Activated CD4-positive, alpha-beta T cell treated with anti-CD3 and anti-CD28 coated beads for 36 hours (primary cell): ENCODE measurements at regions of chr16 and their contacts with region 1.

Region 1: GRCh38 chr16:66608241-66609138 is 4.0 kb downstream of the CMTM3 start:
- DNase-seq: peak; percentile 92
- ATAC-seq: peak; percentile 50
- H3K4me3 Mint-ChIP-seq: no peak overlapping the region
- H3K27ac Mint-ChIP-seq: peak overlapping the region; percentile 78
- H3K4me1 Mint-ChIP-seq: peaks cover 35% of the 10 kb centered on the region
- H3K27me3 Mint-ChIP-seq: no peaks in the 10 kb centered on the region

Region 2: DNA sequence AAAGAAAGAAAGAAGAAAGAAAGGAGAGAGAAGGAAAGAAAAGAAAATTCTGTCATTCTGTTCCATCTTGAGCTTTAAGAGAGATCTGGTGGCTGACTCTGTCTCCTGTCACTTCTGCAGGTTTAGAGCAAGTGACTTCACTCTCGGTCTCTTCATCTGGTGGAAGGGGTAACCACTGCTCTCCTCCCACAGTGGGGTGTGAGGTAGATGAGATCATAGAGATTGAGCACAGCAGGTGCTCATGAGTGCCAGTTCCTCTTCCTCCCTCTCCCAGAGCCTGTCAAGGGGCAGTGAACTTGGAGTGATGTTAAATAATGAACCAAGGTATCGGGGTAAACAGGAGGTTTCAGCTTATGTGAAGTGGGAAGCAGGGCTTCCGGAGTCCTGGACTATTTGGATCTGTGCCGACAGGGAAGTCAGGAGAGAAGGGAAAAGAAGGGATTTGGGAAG is 133.7 kb before region 1 on chr16:
- CTCF ChIA-PET with region 1: interaction called, 13 read pairs
- POLR2A ChIA-PET with region 1: no interaction called
- intact Hi-C with region 1: loop called in 1 of 2 experiments (anchors 2 kb)
- DNase-seq: peak; percentile 77
- ATAC-seq: peak; percentile 91
- H3K4me3 Mint-ChIP-seq: no peak overlapping the region
- H3K27ac Mint-ChIP-seq: peak overlapping the region; percentile 68
- H3K4me1 Mint-ChIP-seq: peaks cover 25% of the 10 kb centered on the region
- H3K27me3 Mint-ChIP-seq: no peaks in the 10 kb centered on the region

Region 3: DNA sequence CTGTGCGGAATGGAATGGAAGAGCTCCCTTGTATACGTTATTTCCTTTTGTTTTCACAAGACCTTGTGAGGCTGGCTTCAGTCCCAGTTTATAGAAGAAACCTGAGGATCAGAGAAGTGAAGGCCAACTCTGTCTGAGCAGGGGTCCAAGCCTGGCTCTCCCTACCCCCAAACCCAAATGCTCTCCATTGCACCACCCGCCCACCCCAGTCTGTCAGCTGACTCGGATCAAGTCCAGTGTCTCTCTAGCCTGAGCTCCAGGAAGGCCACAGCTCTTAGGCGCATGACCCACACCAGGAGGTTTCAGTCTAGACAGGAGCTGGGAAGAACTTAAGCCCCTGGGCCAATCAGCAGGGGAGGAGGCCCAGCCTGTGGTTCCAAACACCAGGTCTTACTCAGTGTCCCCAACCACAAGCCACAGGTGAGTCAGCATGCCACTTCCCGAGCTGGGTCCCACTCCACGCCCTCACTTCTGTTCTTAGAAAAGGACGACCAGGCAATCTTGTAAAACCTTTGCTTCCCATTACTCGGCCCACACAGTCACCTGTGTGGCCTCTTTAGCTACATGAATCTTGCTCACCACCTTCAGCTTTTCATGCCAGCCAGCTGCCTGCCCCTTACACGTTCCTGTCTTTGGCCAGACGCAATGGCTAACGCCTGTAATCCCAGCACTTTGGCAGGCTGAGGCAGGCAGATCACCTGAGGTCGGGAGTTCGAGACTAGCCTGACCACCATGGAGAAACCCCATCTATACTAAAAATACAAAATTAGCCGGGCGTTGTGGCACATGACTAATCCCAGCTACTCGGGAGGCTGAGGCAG is 86.3 kb before region 1 on chr16:
- CTCF ChIA-PET with region 1: interaction called, 11 read pairs
- POLR2A ChIA-PET with region 1: interaction called, 4 read pairs
- intact Hi-C with region 1: loop called in 1 of 2 experiments (anchors 1 kb)
- DNase-seq: peak; percentile 96
- ATAC-seq: peak; percentile 86
- H3K4me3 Mint-ChIP-seq: peak overlapping the region; percentile 55
- H3K27ac Mint-ChIP-seq: peak overlapping the region; percentile 86
- H3K4me1 Mint-ChIP-seq: peaks cover 83% of the 10 kb centered on the region
- H3K27me3 Mint-ChIP-seq: no peaks in the 10 kb centered on the region

Region 4: GRCh38 chr16:66588981-66589713 is 19.3 kb before region 1 on chr16:
- CTCF ChIA-PET with region 1: interaction called, 16 read pairs
- POLR2A ChIA-PET with region 1: no interaction called
- intact Hi-C with region 1: loop called (anchors 1 to 2 kb)
- DNase-seq: peak; percentile 86
- ATAC-seq: peak; percentile 99
- H3K4me3 Mint-ChIP-seq: peak overlapping the region; percentile 63
- H3K27ac Mint-ChIP-seq: peak overlapping the region; percentile 65
- H3K4me1 Mint-ChIP-seq: peaks cover 35% of the 10 kb centered on the region
- H3K27me3 Mint-ChIP-seq: no peaks in the 10 kb centered on the region

Region 5: GRCh38 chr16:66696669-66697630 is 88.5 kb after region 1 on chr16 and contains the start of gene CMTM4:
- CTCF ChIA-PET with region 1: interaction called, 3 read pairs
- POLR2A ChIA-PET with region 1: no interaction called
- intact Hi-C with region 1: loop called in 1 of 2 experiments (anchors 1 kb)
- DNase-seq: peak; percentile 87
- ATAC-seq: peak; percentile 96
- H3K4me3 Mint-ChIP-seq: peak within 1 kb of the TSS; percentile 73
- H3K27ac Mint-ChIP-seq: no peak within 1 kb of the TSS
- H3K4me1 Mint-ChIP-seq: peaks cover 12% of the 10 kb centered on the region
- H3K27me3 Mint-ChIP-seq: peaks cover 10% of the 10 kb centered on the region
- total RNA-seq, gene CMTM4: 3.3 to 4.5 TPM

Region 6: GRCh38 chr16:66924527-66925321 is 316.2 kb after region 1 on chr16:
- CTCF ChIA-PET with region 1: no interaction called
- POLR2A ChIA-PET with region 1: no interaction called
- intact Hi-C with region 1: loop called in 1 of 2 experiments (anchors 5 kb)
- DNase-seq: peak; percentile 73
- ATAC-seq: peak; percentile 75
- H3K4me3 Mint-ChIP-seq: peak overlapping the region; percentile 38
- H3K27ac Mint-ChIP-seq: no peak overlapping the region
- H3K4me1 Mint-ChIP-seq: peaks cover 7% of the 10 kb centered on the region
- H3K27me3 Mint-ChIP-seq: peaks cover 33% of the 10 kb centered on the region